RWPE1 (cell line): ENCODE measurements at regions of chr17 and their contacts with region 1.

Region 1: DNA sequence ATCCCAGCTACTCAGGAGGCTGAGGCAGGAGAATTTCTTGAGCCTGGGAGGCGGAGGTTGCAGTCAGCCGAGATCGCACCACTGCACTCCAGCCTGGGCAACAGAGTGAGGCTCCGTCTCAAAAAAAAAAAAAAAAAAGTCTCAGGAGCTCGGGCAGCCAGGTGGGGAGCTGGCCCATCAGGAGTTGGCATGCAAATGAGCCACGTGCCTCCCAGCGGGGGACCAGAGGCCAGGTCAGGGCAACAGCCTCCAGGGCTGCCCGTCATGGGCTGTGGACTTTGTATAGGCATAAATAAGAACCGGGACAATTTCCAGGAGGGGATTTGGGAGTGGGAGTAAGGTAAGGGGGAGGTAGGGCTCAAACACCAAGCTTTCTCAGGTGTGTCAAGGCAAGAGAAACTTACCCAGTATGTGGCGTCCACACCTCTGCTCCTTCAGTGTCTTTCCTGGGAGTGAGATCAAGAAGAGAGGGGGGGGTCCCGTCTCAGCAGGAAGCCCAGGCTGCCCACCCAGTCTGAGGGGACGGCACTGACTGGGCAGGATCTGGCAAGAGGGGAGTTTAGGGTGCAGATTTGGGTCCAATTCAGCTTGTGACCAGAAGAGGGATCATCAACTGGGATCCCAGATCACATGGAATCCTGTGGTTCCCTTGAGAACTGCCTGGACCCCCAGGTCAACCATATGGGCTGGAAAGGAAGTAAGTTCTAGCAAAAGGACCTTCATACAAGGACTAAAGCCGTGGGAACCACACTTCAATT is 22.3 kb upstream of the G6PC1 start:
- DNase-seq: no peak
- H3K27ac ChIP-seq: no peak overlapping the region
- CTCF ChIP-seq: no peak

Region 2: GRCh38 chr17:42895185-42895555 is 16.9 kb after region 1 on chr17:
- CTCF ChIA-PET with region 1: interaction called, 10 read pairs
- POLR2A ChIA-PET with region 1: no interaction called
- DNase-seq: peak; percentile 85
- H3K27ac ChIP-seq: peak overlapping the region; percentile 69
- CTCF ChIP-seq: no peak

Region 3: GRCh38 chr17:42953669-42954068 is 75.4 kb after region 1 on chr17:
- CTCF ChIA-PET with region 1: no interaction called
- POLR2A ChIA-PET with region 1: no interaction called
- DNase-seq: no peak
- H3K27ac ChIP-seq: no peak overlapping the region
- CTCF ChIP-seq: no peak